Breast epithelium (tissue), 4 donors: ENCODE measurements at regions of chr1 and their contacts with region 1.

Region 1: DNA sequence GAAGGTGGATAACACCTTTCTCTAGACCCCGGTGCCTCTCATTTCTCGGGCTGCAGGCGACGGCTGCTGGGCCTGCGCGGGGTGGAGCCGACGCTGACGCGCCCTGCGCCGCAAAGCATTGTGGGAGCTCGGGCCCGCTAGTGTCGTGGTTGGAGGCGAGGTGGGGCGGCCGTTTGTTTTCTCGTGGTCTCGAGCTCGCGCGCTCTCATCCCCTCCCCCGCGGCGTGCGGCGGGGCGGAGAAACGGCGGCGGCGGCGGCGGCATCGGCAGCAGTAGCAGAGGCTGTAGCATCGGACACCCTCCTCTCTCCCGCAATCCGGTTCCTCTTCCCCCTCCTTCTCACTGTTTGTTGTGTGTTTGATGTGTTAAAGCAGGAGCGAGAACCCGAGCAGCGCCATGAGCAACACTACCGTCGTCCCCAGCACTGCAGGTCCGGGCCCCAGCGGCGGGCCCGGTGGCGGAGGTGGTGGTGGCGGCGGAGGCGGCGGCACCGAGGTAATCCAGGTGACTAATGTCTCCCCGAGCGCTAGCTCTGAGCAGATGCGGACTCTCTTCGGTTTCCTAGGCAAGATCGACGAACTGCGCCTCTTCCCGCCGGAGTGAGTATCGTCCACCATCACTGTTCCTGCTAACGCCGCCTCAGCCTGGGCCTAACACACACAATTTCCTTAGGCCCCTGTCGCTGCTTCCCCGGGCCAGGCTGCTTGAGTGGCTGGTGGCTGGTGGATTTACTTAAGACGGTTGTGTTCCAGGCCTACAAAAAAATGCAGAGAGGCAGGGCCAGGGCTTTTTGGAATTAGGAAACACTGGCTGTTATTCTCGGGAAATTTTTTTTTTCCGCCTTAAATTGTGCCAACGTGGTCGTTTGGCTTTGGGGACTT is at the start of gene SRSF11:
- DNase-seq: peak; percentile 91 to 95
- H3K4me3 ChIP-seq: peak within 1 kb of the TSS; percentile 58 to 79 (median 70)
- H3K27ac ChIP-seq: peak within 1 kb of the TSS; percentile 98 to 99
- H3K4me1 ChIP-seq: no peaks in the 10 kb centered on the region
- H3K27me3 ChIP-seq: no peaks in the 10 kb centered on the region
- CTCF ChIP-seq: peak in 1 of 3 donors; percentile 38
- POLR2A ChIP-seq: peak; percentile 63
- total RNA-seq, gene SRSF11: 200 to 295 (median 225) TPM

Region 2: GRCh38 chr1:70188522-70188921 is 33.0 kb before region 1 on chr1:
- intact Hi-C with region 1: no loop called
- DNase-seq: no peak
- H3K4me3 ChIP-seq: no peak overlapping the region
- H3K27ac ChIP-seq: no peak overlapping the region
- H3K4me1 ChIP-seq: no peaks in the 10 kb centered on the region
- H3K27me3 ChIP-seq: no peaks in the 10 kb centered on the region
- CTCF ChIP-seq: no peak
- POLR2A ChIP-seq: no peak

Region 3: GRCh38 chr1:70264839-70265238 is 43.4 kb after region 1 on chr1:
- intact Hi-C with region 1: loop called (anchors 2 kb)
- DNase-seq: no peak
- H3K4me3 ChIP-seq: no peak overlapping the region
- H3K27ac ChIP-seq: no peak overlapping the region
- H3K4me1 ChIP-seq: no peaks in the 10 kb centered on the region
- H3K27me3 ChIP-seq: no peaks in the 10 kb centered on the region
- CTCF ChIP-seq: no peak
- POLR2A ChIP-seq: no peak